Activated B cell treated with CpG ODN at 0.5 μM for 24 hours (primary cell): ENCODE measurements at regions of chr20 and their contacts with region 1.

Region 1: GRCh38 chr20:2093159-2093781 is 8.4 kb upstream of the STK35 start:
- DNase-seq: no peak
- ATAC-seq: no peak
- H3K4me3 Mint-ChIP-seq: no peak overlapping the region
- H3K27ac Mint-ChIP-seq: no peak overlapping the region
- H3K4me1 Mint-ChIP-seq: peaks cover 5% of the 10 kb centered on the region
- H3K27me3 Mint-ChIP-seq: peaks cover 32% of the 10 kb centered on the region
- CTCF ChIP-seq: no peak

Region 2: GRCh38 chr20:2080533-2081224 is 12.6 kb before region 1 on chr20:
- CTCF ChIA-PET with region 1: no interaction called
- POLR2A ChIA-PET with region 1: no interaction called
- intact Hi-C with region 1: no loop called
- DNase-seq: no peak
- ATAC-seq: no peak
- H3K4me3 Mint-ChIP-seq: no peak overlapping the region
- H3K27ac Mint-ChIP-seq: no peak overlapping the region
- H3K4me1 Mint-ChIP-seq: no peaks in the 10 kb centered on the region
- H3K27me3 Mint-ChIP-seq: peaks cover 41% of the 10 kb centered on the region
- CTCF ChIP-seq: no peak

Region 3: DNA sequence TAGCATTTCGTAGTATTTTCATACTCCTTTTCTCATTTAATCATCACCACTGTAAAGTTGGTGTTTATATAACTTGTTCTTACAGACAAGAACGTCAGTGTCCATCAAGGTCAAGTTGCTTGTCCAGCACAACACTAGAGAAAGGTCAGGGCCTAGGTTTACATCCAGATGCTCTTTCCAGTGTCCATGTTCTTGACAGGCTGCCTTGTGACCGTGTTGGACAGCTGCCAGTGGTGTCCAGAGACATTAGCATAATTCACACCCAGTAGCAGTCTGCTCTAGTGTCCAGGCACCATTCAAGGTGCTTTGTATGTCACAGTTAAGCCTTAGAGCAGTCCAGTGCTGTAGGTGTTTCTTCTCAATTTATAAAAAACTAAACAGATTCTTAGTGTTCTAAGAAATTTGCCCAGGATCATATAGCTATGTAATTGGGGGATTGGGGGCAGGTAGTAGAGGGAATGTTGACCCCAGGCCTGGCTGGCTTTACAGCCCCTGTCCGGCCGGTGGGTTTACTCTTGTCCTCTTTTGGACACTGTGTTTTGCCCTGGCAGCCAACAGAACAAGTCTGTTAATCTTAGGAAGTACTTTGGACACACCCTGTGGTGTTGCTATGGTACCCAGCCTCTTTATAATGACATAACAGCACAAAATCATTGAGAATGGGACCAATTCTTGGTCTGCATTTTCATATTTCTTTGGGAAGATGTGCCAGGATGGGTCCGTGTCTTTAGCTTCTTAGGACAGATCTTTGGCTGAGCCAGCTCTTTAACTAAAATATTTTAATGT is 16.3 kb after region 1 on chr20:
- CTCF ChIA-PET with region 1: interaction called, 3 read pairs
- POLR2A ChIA-PET with region 1: no interaction called
- intact Hi-C with region 1: loop called (anchors 2 kb)
- DNase-seq: no peak
- ATAC-seq: no peak
- H3K4me3 Mint-ChIP-seq: no peak overlapping the region
- H3K27ac Mint-ChIP-seq: no peak overlapping the region
- H3K4me1 Mint-ChIP-seq: peaks cover 90% of the 10 kb centered on the region
- H3K27me3 Mint-ChIP-seq: no peaks in the 10 kb centered on the region
- CTCF ChIP-seq: no peak